ENCODE measurements at regions of chr17 and their contacts with region 1.

Region 1: DNA sequence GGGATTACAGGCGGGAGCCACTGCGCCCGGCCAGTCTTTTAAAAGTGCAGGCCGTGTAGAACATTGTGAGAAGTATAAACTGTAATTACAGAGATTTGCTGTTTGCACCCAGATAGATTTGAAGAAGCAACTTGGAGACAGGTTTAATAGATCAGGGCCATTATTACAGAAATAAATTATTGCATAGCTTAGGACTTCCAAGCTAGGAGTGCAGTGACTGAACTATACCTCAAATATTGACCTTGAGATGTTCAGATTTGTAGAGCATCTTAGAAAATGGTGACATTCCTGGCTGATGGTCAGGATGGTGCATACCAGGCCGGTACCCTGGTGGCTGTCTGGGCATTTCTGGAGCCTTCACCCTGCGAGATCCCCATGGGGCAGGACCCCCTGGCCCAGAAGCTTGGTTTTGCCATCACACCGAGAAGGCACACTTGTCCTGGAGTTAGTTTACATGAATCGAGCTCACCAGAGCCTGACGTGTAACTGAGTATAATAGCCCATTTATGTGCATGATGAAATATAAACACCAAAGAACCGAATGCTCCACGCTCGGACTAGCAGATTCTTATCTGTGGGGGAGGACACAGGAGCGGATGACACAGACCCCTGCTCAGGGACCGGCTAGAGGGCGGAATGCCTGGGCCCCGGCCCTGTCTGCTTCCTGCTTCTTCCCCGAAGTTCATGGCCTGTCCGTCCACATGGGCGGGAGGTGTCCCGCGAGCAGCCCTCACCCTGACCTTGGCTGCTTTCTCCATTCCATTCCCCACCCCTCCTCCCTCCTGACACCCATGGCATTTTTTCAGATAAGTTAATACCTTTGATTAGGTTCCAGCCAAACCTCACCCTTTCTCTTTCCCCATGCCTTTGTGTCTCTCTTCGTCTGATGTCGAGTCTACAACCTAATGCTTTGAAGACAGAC is 32.1 kb downstream of the CCDC40 start:
- DNase-seq: no peak
- H3K4me3 Mint-ChIP-seq: no peak overlapping the region
- H3K27ac Mint-ChIP-seq: no peak overlapping the region
- H3K4me1 Mint-ChIP-seq: peaks cover 8% of the 10 kb centered on the region
- H3K27me3 Mint-ChIP-seq: no peaks in the 10 kb centered on the region
- CTCF ChIP-seq: no peak

Region 2: DNA sequence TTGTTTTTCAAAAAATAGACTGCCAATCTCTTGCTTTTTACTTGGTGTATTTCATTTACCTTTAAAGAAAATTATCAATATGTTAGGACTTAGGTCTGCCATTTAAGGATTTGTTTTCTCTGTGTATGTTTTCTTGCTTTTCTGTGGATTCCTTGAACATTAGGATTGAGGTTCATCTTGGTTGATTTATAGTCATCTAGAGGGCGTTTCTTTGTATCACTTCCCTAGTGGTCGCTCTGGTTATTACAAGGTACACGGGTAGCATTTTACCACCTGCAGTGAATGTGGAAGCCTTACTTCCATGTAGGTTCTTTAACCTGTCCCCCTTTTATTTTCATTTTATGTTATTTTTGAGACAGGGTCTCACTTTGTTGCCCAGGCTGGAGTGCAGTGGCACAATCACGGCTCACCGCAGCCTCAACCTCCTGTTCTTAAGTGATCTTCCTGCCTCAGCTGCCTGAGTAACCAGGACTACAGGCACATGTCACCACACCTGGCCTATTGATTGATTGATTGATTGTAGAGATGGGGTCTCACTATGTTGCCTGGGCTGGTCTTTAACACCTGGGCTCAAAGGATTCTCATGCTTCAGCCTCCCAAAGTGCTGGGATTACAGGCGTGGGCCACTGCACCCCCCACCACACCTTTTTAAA is 194.1 kb before region 1 on chr17:
- CTCF ChIA-PET with region 1: no interaction called
- POLR2A ChIA-PET with region 1: no interaction called
- intact Hi-C with region 1: no loop called
- DNase-seq: peak; percentile 58
- H3K4me3 Mint-ChIP-seq: no peak overlapping the region
- H3K27ac Mint-ChIP-seq: no peak overlapping the region
- H3K4me1 Mint-ChIP-seq: no peaks in the 10 kb centered on the region
- H3K27me3 Mint-ChIP-seq: no peaks in the 10 kb centered on the region
- CTCF ChIP-seq: peak; percentile 34

Region 3: GRCh38 chr17:79888811-79889634 is 179.5 kb before region 1 on chr17:
- CTCF ChIA-PET with region 1: no interaction called
- POLR2A ChIA-PET with region 1: no interaction called
- intact Hi-C with region 1: no loop called
- DNase-seq: no peak
- H3K4me3 Mint-ChIP-seq: no peak overlapping the region
- H3K27ac Mint-ChIP-seq: no peak overlapping the region
- H3K4me1 Mint-ChIP-seq: peaks cover 12% of the 10 kb centered on the region
- H3K27me3 Mint-ChIP-seq: peaks cover 39% of the 10 kb centered on the region
- CTCF ChIP-seq: no peak

Region 4: DNA sequence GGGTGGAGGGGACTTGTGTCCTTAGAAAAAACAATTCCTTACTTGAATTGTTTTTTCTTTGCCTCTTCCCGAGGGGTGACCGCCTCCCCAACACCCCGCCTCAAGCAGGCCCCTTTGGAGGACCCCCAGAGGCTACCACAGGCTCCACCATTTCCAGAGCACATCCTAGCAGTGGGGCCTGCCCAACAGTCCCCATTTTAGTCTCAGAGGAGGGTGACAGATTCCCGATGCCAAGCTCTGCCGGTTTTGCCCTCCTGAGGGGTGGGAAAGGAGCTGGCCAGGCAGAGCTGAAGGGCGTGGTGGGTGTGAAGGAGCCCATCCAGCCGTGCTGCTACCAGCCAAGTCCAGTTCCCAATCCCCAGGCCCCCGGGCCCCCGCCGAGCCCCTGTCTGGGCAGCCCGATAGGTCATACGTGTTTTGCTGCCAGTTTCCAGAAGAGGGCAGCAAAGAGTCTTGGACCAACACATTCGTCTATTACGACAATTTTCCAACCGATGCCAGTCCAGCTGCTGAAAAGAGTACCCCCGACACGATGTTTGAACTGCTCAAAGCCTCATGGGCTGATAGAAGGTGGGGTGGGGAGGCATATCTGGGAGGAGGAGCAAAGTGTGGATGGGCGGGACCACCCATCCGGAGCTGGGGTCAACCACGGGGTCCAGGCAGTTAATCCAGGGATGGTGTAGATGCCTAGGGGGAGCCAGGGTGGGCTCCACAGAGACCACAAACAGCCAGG is 14.0 kb after region 1 on chr17:
- CTCF ChIA-PET with region 1: interaction called, 14 read pairs
- POLR2A ChIA-PET with region 1: no interaction called
- intact Hi-C with region 1: no loop called
- DNase-seq: peak; percentile 72
- H3K4me3 Mint-ChIP-seq: no peak overlapping the region
- H3K27ac Mint-ChIP-seq: no peak overlapping the region
- H3K4me1 Mint-ChIP-seq: no peaks in the 10 kb centered on the region
- H3K27me3 Mint-ChIP-seq: peaks cover 21% of the 10 kb centered on the region
- CTCF ChIP-seq: peak; percentile 65

Region 5: GRCh38 chr17:80147035-80147836 is 78.7 kb after region 1 on chr17 and contains the start of gene EIF4A3:
- CTCF ChIA-PET with region 1: no interaction called
- POLR2A ChIA-PET with region 1: no interaction called
- intact Hi-C with region 1: no loop called
- DNase-seq: peak; percentile 99
- H3K4me3 Mint-ChIP-seq: peak within 1 kb of the TSS; percentile 84
- H3K27ac Mint-ChIP-seq: peak within 1 kb of the TSS; percentile 62
- H3K4me1 Mint-ChIP-seq: peaks cover 17% of the 10 kb centered on the region
- H3K27me3 Mint-ChIP-seq: no peaks in the 10 kb centered on the region
- CTCF ChIP-seq: no peak
- total RNA-seq, gene EIF4A3: 87.0 and 97.7 TPM in 2 replicates